Dendritic cell treated with granulocyte-macrophage colony-stimulating factor and Interleukin-4, amounts not matched to agents 40 ng/mL and 50 ng/mL, for 4 days (primary cell): ENCODE measurements at regions of chr19 and their contacts with region 1.

Region 1: DNA sequence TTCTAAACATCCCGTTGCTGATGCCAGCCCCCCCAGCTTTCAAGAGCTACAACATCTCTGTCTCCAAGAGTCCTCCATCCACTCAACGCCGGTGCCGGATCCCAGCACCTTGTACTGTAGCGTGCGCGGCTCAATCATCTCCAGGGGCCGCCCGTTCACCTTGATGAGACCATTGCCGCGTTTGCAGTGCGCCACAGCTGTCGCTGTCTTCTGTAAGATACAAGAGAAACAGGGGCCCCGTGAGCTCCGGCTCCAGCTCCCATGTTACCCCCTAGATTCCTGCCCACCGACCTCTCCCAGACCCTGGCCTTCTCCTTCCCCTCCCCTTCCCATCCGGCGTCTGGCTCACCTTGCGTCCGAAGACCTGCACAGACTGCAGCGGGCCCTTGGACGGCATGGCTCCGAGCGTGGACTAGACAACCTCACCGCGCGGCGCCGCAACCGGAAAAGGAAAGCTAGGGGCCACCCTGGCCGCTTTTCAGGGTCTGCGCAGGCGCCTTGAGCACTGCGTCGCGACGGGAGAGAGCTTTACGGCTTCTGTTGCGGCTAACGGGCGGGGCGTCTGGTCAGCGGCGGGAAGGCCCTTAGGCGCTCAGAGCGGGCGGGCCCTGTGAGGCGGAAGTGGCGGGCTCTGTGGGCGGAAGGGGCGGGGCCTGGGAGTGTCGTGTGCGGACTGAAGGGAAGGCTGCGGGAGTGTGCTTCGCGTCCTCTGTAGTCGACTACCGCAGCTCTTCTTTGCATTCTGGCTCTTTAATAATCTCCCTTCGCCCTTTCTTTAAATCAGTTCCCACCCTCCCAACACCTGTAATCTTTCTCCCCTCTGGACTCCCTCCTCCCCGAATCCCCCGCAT is at the start of gene RPS16:
- H3K4me3 Mint-ChIP-seq: peak within 1 kb of the TSS; percentile 97
- H3K27ac Mint-ChIP-seq: peak within 1 kb of the TSS; percentile 95
- H3K4me1 Mint-ChIP-seq: peaks cover 48% of the 10 kb centered on the region
- H3K27me3 Mint-ChIP-seq: peaks cover 9% of the 10 kb centered on the region

Region 2: DNA sequence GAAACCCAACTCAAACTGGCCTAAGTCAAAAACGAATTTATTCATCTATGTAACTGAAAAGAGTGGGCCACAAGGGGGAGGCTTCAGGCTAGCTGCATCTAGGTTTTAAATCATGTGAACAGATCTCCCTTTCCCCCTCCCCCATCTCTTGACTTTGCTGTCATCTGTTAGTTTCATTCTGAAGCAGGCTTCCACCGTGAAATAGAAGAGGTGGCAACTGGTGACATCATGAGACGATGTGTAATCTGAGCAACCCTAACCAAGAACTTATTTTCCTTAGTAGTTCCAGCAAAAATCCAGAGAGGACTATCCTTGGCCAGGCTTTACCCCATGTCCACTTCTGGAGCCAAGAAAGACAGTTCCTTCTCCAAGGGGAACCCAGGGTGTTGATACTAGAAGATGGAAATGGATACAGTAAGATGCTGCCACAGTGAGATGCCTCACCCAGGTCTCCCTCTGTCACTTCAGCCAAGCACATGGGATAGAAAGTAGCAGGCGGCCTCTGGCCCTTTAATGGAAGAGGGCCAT is 84.1 kb before region 1 on chr19:
- intact Hi-C with region 1: no loop called
- H3K4me3 Mint-ChIP-seq: no peak overlapping the region
- H3K27ac Mint-ChIP-seq: peak overlapping the region; percentile 38
- H3K4me1 Mint-ChIP-seq: peaks cover 44% of the 10 kb centered on the region
- H3K27me3 Mint-ChIP-seq: no peaks in the 10 kb centered on the region

Region 3: DNA sequence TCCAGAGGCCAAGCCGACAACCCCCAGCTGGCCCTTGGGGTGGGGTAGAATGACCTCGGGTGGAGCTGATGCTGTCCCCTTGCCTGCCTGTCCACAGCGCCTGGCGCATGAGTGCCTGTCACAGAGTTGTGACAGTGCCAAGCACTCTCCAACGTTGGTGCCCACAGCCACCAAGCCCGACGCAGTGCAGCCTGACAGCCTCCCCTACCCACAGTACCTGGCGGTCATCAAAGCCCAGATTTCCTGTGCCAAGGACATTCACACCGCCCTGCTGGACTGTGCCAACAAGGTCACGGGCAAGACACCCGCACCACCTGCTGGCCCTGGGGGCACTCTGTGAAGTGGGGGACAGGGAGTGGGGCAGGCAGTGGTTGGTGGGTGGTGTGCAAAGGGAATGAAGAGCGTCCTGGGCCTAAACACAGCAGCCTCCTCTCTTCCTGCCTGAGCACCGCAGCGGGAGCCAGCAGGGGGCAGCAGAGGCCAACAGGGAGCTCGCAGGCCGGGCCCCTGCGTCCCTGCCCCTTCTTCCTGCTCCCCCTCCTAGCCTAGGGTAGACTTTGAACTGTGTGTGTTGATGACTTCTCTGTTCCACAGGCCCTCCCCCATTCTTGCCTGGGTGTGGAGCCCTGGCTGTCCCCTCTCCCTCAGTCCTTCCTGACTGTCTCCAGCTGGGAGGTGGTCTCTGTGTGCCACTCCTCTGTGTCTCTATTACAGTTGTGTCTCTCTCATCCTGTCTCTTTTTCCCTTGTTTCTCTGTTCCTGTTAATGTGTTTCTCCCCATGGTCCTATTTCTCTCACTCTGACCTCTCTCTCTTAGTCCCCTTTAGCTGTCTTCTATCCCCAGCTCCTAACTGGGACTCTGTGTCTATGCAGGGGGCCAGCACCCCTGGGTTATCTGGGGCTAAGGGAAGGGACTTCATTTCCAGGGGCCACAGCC is 38.1 kb before region 1 on chr19:
- intact Hi-C with region 1: loop called (anchors 2 kb)
- H3K4me3 Mint-ChIP-seq: peak overlapping the region; percentile 60
- H3K27ac Mint-ChIP-seq: peak overlapping the region; percentile 99
- H3K4me1 Mint-ChIP-seq: peaks cover 80% of the 10 kb centered on the region
- H3K27me3 Mint-ChIP-seq: no peaks in the 10 kb centered on the region

Region 4: DNA sequence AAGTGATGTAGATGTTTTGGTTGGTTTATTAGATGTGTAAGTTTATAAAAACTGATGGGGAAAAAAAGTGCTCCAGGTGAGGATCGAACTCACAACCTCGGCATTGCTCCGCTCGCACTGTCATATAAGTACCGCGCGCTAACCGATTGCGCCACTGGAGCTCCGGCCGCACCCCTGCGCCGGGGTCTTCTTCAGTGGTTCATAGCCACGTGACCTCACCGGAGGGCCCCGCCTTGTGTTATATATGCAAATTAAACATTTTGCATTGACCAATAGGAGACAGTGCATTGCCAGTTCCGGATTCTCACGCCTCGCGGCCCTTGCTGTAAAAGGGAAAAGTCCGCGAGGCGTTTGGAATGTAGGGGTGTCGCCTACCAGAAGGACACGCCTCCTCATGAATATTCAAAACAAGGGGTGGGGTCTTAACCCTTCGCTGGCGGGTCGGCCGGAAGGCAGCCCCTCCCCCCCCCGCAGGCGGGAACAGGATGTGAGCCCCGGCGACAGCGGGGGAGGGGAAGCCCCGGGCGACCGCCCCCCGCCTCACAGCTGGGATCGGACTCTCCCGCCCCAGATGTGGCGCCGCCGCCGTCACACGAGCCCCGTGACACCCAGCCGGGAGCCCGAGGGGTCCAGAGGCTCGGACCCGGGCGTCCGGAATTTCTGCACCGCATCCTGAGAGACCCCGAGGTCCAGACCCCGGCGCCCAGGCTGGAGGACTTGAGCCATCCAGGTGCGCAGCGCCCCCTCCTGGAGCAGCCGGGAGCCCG is 23.4 kb before region 1 on chr19 and contains the start of gene PLEKHG2:
- intact Hi-C with region 1: loop called (anchors 1 kb)
- H3K4me3 Mint-ChIP-seq: peak within 1 kb of the TSS; percentile 81
- H3K27ac Mint-ChIP-seq: peak within 1 kb of the TSS; percentile 98
- H3K4me1 Mint-ChIP-seq: peaks cover 44% of the 10 kb centered on the region
- H3K27me3 Mint-ChIP-seq: peaks cover 2% of the 10 kb centered on the region

Region 5: DNA sequence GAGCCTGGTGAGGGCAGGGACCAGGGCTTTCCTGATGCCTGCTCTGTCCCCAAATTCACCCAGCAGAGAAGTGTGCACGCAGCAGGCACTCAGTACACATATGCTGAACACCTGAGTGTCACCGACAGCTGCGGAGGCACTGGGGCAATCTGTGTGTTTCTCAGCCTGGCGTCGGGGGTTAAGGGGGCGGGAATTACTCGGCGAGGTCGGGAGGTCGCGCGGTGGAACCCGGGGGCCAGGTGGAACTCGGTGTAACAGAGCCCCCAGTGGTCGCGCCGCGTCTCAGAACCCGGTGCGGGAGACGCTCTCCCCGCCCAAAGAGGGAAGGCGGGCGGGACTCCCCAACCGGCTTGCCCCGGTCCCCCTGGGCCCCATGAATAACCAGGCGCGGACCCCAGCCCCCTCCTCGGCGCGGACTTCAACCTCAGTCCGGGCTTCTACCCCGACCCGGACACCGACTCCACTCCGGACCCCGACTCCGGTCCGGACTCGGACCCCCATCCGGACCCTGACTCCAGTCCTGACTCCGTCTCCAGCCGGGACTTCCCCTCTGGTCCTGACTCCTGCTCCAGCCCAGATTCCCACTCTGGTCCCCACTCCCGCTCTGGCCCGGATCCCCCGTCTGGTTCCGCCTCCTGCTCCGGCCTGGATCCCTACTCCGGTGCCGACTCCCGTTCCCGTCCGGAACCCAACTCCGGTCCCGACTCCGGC is 79.3 kb after region 1 on chr19 and contains the start of gene SELENOV:
- intact Hi-C with region 1: no loop called
- H3K4me3 Mint-ChIP-seq: peak within 1 kb of the TSS; percentile 24
- H3K27ac Mint-ChIP-seq: peak within 1 kb of the TSS; percentile 13
- H3K4me1 Mint-ChIP-seq: peaks cover 22% of the 10 kb centered on the region
- H3K27me3 Mint-ChIP-seq: peaks cover 90% of the 10 kb centered on the region